Activated CD4-positive, alpha-beta T cell treated with anti-CD3 and anti-CD28 coated beads, Interleukin-2, amount 10 ng/mL, durations not matched to agents 24 days and 14 days (primary cell): ENCODE measurements at regions of chr2 and their contacts with region 1.

Region 1: GRCh38 chr2:176001916-176002687 is at the start of gene LNPK:
- DNase-seq: peak; percentile 98
- H3K4me3 Mint-ChIP-seq: peak within 1 kb of the TSS; percentile 100
- H3K27ac Mint-ChIP-seq: peak within 1 kb of the TSS; percentile 98
- H3K4me1 Mint-ChIP-seq: peaks cover 20% of the 10 kb centered on the region
- H3K27me3 Mint-ChIP-seq: peaks cover 8% of the 10 kb centered on the region
- total RNA-seq, gene LNPK: 46.3 and 47.8 TPM in 2 replicates

Region 2: GRCh38 chr2:174248187-174248997 is 1753.7 kb before region 1 on chr2 and contains the start of gene OLA1:
- intact Hi-C with region 1: loop called (anchors 10 kb)
- DNase-seq: peak; percentile 99
- H3K4me3 Mint-ChIP-seq: peak within 1 kb of the TSS; percentile 88
- H3K27ac Mint-ChIP-seq: peak within 1 kb of the TSS; percentile 90
- H3K4me1 Mint-ChIP-seq: peaks cover 25% of the 10 kb centered on the region
- H3K27me3 Mint-ChIP-seq: peaks cover 2% of the 10 kb centered on the region
- total RNA-seq, gene OLA1: 164 and 167 TPM in 2 replicates

Region 3: DNA sequence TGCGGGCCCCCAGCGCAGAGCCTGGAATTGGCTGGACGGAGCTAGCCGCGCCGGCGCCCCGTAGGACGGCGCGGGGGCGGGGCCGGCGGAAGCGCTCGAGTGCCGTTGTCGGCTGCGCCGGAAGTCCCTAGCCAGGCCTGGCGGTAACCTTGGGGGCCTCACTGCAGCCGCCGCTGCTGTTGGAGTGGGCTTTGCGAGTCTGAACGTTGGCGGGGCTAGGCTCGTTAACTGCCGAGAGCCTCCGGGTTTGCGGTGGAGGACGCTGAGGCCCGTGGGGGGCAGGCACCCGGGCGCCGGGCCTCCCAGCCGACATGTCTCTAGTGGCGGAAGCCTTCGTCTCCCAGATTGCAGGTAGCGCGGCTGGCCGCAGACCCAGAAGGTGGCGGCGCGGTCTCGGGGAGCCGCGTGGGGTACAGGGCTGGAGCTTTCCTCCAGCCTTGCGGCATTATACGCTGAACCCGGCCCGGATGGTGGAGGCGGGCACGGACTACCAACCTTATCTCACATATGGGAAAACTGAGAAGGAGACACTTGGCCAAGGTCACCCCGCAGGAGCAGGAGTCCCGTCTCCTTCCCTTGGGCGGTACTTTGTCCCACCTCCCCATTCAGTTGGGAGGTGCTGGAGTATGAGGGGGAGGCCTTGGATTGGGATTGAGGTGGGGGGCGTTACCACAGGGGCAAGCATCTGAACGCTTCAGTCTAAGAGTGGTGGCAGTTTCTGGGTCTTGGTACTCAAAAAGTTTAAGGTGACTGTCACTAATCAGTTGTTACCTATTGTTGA is 267.4 kb after region 1 on chr2 and contains the start of gene MTX2:
- intact Hi-C with region 1: loop called (anchors 5 kb)
- DNase-seq: peak; percentile 92
- H3K4me3 Mint-ChIP-seq: peak within 1 kb of the TSS; percentile 93
- H3K27ac Mint-ChIP-seq: peak within 1 kb of the TSS; percentile 96
- H3K4me1 Mint-ChIP-seq: peaks cover 9% of the 10 kb centered on the region
- H3K27me3 Mint-ChIP-seq: peaks cover 6% of the 10 kb centered on the region
- total RNA-seq, gene MTX2: 29.9 and 30.7 TPM in 2 replicates

Region 4: DNA sequence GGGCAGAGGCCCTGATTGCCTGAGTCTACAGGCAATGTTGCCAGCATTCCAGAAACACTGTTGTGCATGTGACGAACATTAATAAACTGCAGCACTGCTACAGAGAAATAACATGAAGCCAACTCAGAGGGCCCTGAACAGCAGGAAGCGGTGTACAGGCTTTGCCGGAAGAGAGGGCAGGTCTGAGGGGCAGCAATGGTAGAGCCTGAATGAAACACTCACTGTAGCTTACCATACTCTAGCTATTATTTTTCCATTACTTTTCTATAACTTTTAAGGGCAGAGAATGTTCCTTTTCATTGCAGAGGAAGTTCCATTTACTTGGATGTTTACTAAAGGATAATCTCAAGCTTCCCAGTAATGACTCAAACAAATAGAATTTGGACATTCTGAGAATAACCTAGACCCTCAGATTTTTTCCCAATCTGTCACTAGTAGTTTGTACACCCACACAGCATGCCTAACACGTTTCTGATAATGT is 417.5 kb after region 1 on chr2:
- intact Hi-C with region 1: no loop called
- DNase-seq: no peak
- H3K4me3 Mint-ChIP-seq: no peak overlapping the region
- H3K27ac Mint-ChIP-seq: no peak overlapping the region
- H3K4me1 Mint-ChIP-seq: no peaks in the 10 kb centered on the region
- H3K27me3 Mint-ChIP-seq: peaks cover 19% of the 10 kb centered on the region

Region 5: GRCh38 chr2:177296040-177296439 is 1293.9 kb after region 1 on chr2:
- intact Hi-C with region 1: loop called (anchors 5 kb)
- DNase-seq: no peak
- H3K4me3 Mint-ChIP-seq: no peak overlapping the region
- H3K27ac Mint-ChIP-seq: no peak overlapping the region
- H3K4me1 Mint-ChIP-seq: peaks cover 34% of the 10 kb centered on the region
- H3K27me3 Mint-ChIP-seq: no peaks in the 10 kb centered on the region

Region 6: DNA sequence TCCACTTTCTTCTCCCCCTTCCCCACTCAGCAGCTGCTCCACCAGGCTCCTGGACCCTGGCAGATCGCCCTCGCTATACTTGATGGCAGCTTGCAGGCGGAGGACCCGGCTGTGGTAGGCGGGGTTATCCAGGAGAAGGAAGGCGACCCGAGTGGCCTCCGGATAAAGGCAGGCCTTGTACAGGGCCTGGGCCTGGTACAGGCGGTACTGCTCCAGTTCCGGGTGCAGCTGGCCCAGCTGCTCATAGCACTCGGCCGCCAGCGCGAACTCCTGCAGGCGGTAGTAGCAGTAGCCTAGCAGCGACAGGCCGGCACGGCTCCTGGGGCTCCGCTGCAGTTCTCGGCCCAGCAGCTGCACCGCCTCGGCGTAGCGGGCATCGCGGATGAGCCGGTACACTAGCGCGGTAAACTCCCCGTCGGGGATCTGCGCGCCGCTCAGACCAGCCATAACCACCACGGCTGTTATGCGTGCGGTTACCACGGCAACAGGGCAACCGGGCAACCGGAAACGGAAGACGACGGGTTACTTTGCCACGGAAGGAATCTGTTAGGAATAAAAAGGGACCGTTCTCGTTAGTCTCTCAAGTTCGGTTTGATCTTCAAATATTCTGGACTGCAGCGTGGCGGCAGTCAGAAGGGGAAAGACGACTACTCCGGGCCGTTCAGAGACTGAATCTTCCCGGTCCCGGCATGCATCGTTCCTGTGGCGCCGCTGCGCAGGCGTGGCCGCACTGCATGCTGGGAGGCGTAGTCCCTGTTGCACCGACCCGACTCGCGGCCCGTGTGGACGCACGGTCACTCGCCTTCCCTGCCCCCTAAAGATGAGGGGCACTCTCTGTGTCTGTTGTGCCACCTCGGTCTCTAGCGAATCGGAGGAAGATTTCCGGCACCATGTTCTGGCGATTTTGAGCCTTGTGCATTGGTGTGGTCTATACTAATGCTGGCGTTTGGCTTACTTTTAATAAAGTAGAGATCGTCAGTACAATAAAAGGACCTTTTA is 1616.5 kb after region 1 on chr2:
- intact Hi-C with region 1: loop called (anchors 10 kb)
- DNase-seq: peak; percentile 98
- H3K4me3 Mint-ChIP-seq: peak overlapping the region; percentile 92
- H3K27ac Mint-ChIP-seq: peak overlapping the region; percentile 97
- H3K4me1 Mint-ChIP-seq: peaks cover 8% of the 10 kb centered on the region
- H3K27me3 Mint-ChIP-seq: peaks cover 24% of the 10 kb centered on the region